Activated CD4-positive, alpha-beta T cell treated with anti-CD3 and anti-CD28 coated beads for 36 hours (primary cell): ENCODE measurements at regions of chr5 and their contacts with region 1.

Region 1: DNA sequence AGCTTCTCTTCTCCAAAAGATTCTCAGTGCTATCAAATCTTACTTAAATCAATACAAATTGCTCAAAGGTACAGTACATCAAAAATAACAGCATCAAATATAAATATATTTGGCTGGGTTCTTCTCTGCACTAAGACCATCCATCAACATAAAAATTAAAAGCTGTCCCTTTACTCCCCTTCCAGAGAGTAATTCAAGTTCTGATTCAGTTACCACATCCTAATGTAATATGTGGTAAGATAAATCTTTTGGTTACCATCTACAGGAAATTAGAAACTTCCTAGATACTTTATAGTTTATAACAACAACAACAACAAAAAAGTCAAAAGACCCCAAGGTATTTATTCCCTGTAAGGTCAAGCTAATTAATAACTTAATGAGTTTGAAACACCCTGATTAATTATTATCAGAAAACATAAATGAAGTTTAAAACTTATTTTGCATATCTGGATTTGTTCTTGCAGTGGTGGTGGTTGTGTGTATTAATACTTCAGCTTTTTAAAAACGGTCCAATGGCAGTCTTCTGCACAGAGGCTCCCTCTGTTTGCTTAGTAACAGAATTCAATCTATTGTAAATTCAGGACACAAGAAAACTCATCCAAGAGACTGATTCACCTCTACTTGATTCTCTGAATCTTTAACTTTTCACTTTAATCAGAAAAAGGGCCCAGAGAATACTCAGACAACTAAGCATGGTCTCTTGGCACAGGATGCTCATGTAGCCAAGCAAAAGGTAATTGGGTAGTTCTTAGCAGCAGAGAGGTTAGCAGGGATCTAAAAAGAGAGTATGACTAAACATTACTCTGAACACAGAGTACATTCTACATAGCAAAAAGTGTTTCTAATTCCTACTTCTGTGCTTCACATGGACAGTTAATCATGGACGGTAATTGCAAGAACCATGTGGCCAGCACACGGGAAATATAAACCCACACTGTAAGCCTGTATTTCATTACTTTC is 20.1 kb downstream of the DIAPH1 start:
- DNase-seq: no peak
- ATAC-seq: peak; percentile 91
- H3K4me3 Mint-ChIP-seq: no peak overlapping the region
- H3K27ac Mint-ChIP-seq: peak overlapping the region; percentile 51
- H3K4me1 Mint-ChIP-seq: peaks cover 74% of the 10 kb centered on the region
- H3K27me3 Mint-ChIP-seq: no peaks in the 10 kb centered on the region

Region 2: DNA sequence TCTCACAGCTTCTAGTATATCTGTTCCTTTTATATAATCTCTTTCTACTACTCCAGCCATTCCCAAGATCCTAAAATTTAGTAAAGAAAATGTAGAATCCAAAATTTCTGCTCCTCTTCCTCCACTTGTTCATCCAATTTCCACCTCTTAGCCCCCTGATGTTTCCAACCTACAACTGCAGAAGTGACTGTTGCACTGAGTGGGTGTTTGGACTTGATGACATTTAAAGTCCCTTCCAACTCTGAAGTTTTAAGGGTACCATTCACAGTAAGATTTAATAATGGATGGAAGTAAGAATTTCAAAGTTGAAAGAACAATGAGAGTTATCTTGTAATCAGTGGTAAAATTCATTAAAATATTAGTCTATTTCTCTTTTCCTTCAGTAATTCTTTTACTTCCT is 14.7 kb after region 1 on chr5:
- CTCF ChIA-PET with region 1: interaction called, 261 read pairs
- POLR2A ChIA-PET with region 1: interaction called, 10 read pairs
- intact Hi-C with region 1: no loop called
- DNase-seq: no peak
- ATAC-seq: no peak
- H3K4me3 Mint-ChIP-seq: peak overlapping the region; percentile 1
- H3K27ac Mint-ChIP-seq: peak overlapping the region; percentile 37
- H3K4me1 Mint-ChIP-seq: peaks cover 77% of the 10 kb centered on the region
- H3K27me3 Mint-ChIP-seq: no peaks in the 10 kb centered on the region

Region 3: DNA sequence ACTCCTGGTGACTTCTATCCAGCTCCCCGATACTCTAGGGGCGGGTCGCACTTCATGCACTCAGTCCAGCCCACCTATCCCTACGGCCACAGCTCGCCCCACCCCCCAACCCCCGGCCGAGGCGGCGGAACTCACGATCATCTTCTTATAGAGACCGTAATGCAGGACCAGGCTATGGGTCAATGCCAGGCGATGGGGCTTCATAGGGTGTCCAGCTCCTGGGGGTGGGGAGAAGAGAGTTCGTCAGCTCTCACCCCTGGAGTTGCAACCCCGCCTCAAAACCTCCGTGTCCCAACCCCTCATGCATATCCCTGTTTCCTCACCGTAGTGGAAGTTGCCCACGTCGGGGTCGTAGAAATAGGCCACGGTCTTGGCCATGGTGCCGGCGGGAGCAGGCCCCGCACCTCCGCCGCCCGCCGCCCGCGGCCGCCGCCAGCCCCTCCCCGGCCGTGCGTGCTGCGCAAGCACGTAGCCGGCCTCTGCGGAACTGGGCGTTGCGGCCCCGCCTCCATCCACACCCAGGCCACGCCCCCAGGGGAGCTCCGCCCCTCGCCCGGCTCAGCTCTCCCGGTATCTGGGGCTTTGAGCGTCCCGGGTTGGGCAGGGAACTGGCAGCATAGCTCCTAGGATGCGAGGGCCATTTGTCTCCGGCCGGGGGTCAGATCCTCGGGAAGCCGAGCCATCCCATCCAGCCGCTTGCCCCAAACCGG is 37.9 kb after region 1 on chr5 and contains the starts of genes HDAC3 and RELL2:
- CTCF ChIA-PET with region 1: interaction called, 59 read pairs
- POLR2A ChIA-PET with region 1: interaction called, 4 read pairs
- intact Hi-C with region 1: no loop called
- DNase-seq: peak; percentile 97
- ATAC-seq: peak; percentile 82
- H3K4me3 Mint-ChIP-seq: peak within 1 kb of the TSS; percentile 92
- H3K27ac Mint-ChIP-seq: peak within 1 kb of the TSS; percentile 92
- H3K4me1 Mint-ChIP-seq: peaks cover 45% of the 10 kb centered on the region
- H3K27me3 Mint-ChIP-seq: no peaks in the 10 kb centered on the region
- total RNA-seq, gene HDAC3: 85.9 to 88.6 TPM
- total RNA-seq, gene RELL2: 24.3 to 27.8 TPM

Region 4: DNA sequence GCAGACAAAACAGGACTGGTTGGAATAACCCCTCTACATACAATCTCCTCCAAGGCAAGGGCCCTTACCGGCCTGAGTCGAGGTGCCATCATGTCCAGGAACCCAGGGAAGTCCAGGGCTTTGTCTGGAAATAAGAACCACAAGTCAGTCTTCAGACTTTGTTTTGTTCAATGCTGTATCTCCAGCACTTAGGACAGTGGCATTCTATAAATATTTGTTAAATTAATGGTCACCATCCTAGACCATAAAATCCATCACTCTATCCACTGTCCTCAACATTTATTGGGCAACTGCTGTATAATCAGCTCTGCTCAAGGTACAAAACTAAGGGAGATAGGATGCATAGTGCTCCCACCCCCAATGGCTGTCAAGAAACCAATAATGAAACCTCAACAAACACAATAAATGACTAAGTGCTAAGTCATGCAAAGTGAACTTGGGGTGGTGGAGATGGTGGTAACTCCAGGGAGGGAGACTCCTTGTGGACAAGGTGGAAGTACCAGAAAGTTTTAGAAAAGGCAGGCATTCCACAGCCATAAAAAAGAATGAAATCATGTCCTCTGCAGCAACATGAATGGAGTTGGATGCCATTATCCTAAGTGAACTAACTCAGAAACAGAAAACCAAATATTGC is 43.1 kb after region 1 on chr5:
- CTCF ChIA-PET with region 1: interaction called, 59 read pairs
- POLR2A ChIA-PET with region 1: interaction called, 4 read pairs
- intact Hi-C with region 1: no loop called
- DNase-seq: peak; percentile 42
- ATAC-seq: peak; percentile 63
- H3K4me3 Mint-ChIP-seq: no peak overlapping the region
- H3K27ac Mint-ChIP-seq: peak overlapping the region; percentile 2
- H3K4me1 Mint-ChIP-seq: peaks cover 22% of the 10 kb centered on the region
- H3K27me3 Mint-ChIP-seq: no peaks in the 10 kb centered on the region